Activated CD8-positive, alpha-beta T cell treated with anti-CD3 and anti-CD28 coated beads, Interleukin-2, amount 10 ng/mL, durations not matched to agents 7 days and 5 days (primary cell): ENCODE measurements at regions of chr17 and their contacts with region 1.

Region 1: DNA sequence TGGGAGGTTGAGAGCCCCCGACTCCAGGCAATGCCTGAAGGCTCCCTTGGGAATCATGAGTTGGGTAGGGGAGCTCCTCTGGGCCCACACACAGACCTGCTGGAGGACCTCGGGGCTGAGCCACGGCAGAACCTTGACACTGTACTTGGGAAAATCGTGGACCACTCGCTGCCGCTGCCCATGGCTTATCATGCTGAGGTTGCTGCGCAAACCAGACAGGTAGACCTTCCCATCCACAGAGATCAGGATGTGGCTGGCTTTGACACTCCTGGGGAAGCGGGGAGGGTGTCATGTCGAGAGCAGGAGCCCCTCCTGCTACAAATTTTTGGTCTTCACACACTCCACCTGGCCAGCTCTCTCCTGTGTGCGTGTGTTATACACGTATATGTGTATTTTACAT is 7.2 kb upstream of the LIMD2 start:
- DNase-seq: no peak
- ATAC-seq: peak; percentile 4
- H3K4me3 Mint-ChIP-seq: peak overlapping the region; percentile 52
- H3K27ac Mint-ChIP-seq: peak overlapping the region; percentile 74
- H3K4me1 Mint-ChIP-seq: peaks cover 80% of the 10 kb centered on the region
- H3K27me3 Mint-ChIP-seq: no peaks in the 10 kb centered on the region

Region 2: GRCh38 chr17:63621766-63622519 is 85.2 kb before region 1 on chr17 and contains the start of gene MAP3K3:
- CTCF ChIA-PET with region 1: interaction called, 16 read pairs
- POLR2A ChIA-PET with region 1: no interaction called
- DNase-seq: peak; percentile 99
- ATAC-seq: peak; percentile 94
- H3K4me3 Mint-ChIP-seq: peak within 1 kb of the TSS; percentile 96
- H3K27ac Mint-ChIP-seq: peak within 1 kb of the TSS; percentile 89
- H3K4me1 Mint-ChIP-seq: peaks cover 32% of the 10 kb centered on the region
- H3K27me3 Mint-ChIP-seq: peaks cover 11% of the 10 kb centered on the region
- total RNA-seq, gene MAP3K3: 31.4 to 32.8 TPM

Region 3: DNA sequence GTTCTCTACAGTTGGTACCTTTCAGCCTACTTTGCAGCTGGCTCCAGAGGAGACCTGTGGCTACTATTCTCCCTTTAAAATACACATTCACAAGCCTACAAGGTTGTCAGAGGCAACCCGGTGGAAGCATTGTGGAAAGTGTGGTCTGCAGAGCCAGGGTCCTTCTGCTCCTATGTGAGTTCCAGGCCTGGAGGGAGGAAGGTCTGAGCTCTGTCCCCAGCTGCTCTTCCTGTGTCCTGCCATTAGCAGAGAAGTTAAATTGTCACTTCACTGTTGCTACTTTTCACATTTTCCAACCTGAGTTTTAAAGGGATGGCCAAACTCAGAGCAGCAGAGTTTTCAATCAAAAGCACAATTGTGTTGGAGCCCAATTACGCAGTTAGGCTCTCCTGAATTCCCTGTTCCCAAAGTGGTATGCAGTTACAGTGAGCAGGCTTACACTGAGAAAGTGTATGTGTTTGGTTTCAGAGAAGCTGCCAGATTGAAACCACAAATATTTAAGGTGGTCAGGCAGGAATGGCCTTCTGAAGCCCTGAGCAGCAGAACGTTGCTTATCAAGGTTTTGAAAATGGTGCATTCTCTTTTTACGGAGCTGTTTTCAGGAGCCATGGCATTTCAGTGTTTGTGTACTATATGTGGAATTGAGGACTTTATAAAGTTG is 60.0 kb before region 1 on chr17:
- CTCF ChIA-PET with region 1: no interaction called
- POLR2A ChIA-PET with region 1: no interaction called
- DNase-seq: no peak
- ATAC-seq: no peak
- H3K4me3 Mint-ChIP-seq: no peak overlapping the region
- H3K27ac Mint-ChIP-seq: no peak overlapping the region
- H3K4me1 Mint-ChIP-seq: peaks cover 16% of the 10 kb centered on the region
- H3K27me3 Mint-ChIP-seq: no peaks in the 10 kb centered on the region

Region 4: GRCh38 chr17:63681572-63681971 is 25.6 kb before region 1 on chr17:
- CTCF ChIA-PET with region 1: interaction called, 11 read pairs
- POLR2A ChIA-PET with region 1: no interaction called
- DNase-seq: no peak
- ATAC-seq: no peak
- H3K4me3 Mint-ChIP-seq: no peak overlapping the region
- H3K27ac Mint-ChIP-seq: no peak overlapping the region
- H3K4me1 Mint-ChIP-seq: no peaks in the 10 kb centered on the region
- H3K27me3 Mint-ChIP-seq: no peaks in the 10 kb centered on the region

Region 5: GRCh38 chr17:63722403-63722802 is 15.3 kb after region 1 on chr17:
- CTCF ChIA-PET with region 1: interaction called, 12 read pairs
- POLR2A ChIA-PET with region 1: interaction called, 3 read pairs
- DNase-seq: no peak
- ATAC-seq: no peak
- H3K4me3 Mint-ChIP-seq: no peak overlapping the region
- H3K27ac Mint-ChIP-seq: no peak overlapping the region
- H3K4me1 Mint-ChIP-seq: peaks cover 2% of the 10 kb centered on the region
- H3K27me3 Mint-ChIP-seq: no peaks in the 10 kb centered on the region